ENCODE measurements at regions of chr5 and their contacts with region 1.

Region 1: GRCh38 chr5:173972925-173973615 is 15.9 kb upstream of the C5orf47 start:
- DNase-seq: peak; percentile 80 to 89 (median 87)
- H3K4me3 ChIP-seq: peak overlapping the region; percentile 41
- H3K27ac ChIP-seq: no peak overlapping the region
- H3K4me1 ChIP-seq: peaks cover 4% of the 10 kb centered on the region
- H3K27me3 ChIP-seq: no peaks in the 10 kb centered on the region
- CTCF ChIP-seq: peak; percentile 71 to 89 (median 88)
- EP300 ChIP-seq: no peak
- POLR2A ChIP-seq: no peak

Region 2: GRCh38 chr5:173615884-173616576 is 357.0 kb before region 1 on chr5:
- intact Hi-C with region 1: loop called (anchors 2 kb)
- DNase-seq: peak; percentile 46 to 72 (median 60)
- H3K4me3 ChIP-seq: peak overlapping the region; percentile 97
- H3K27ac ChIP-seq: peak overlapping the region; percentile 80 to 86
- H3K4me1 ChIP-seq: peaks cover 9% of the 10 kb centered on the region
- H3K27me3 ChIP-seq: no peaks in the 10 kb centered on the region
- CTCF ChIP-seq: peak; percentile 49 to 62 (median 51)
- EP300 ChIP-seq: no peak
- POLR2A ChIP-seq: no peak

Region 3: DNA sequence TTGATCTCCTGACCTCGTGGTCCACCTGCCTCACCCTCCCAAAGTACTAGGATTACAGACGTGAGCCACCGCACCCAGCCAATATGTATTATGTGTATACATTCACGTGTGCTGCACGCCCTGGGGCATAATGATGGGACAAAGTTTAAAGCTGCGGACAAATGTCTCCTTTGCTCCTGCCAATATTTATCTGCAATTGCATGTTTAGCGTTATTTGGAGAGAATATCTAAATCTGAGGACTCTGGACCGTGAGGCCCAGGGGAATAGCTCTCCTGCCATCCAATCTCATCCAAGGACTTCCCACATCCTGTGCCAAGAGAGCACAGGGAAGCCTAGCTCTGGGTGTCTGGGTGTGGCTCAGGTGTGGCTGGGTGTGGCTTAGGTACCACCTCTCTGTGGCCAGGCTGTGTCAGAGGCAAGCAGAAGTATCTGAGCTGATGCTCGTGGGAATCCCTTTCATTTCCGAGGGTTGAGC is 349.7 kb before region 1 on chr5:
- intact Hi-C with region 1: loop called (anchors 2 kb)
- DNase-seq: no peak
- H3K4me3 ChIP-seq: no peak overlapping the region
- H3K27ac ChIP-seq: no peak overlapping the region
- H3K4me1 ChIP-seq: no peaks in the 10 kb centered on the region
- H3K27me3 ChIP-seq: no peaks in the 10 kb centered on the region
- CTCF ChIP-seq: no peak
- EP300 ChIP-seq: no peak
- POLR2A ChIP-seq: no peak

Region 4: DNA sequence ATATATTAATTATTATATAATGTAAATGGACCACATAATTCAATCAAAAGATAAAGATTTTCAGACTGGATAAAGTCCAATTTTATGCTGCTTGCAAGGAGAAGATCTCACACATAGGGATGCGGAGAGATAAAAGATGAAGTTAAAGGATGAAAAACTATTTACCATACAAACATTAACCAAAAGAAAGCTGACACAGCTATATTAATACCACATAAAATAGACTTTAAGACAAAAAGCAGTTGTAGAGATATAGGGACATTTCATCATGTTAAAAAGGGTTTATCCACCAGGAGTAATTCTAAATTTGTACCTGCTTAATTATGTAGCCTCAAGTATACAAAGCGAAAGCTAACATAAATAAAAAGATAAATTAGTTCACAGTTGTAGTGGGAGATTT is 57.2 kb after region 1 on chr5:
- intact Hi-C with region 1: no loop called
- DNase-seq: no peak
- H3K4me3 ChIP-seq: no peak overlapping the region
- H3K27ac ChIP-seq: no peak overlapping the region
- H3K4me1 ChIP-seq: no peaks in the 10 kb centered on the region
- H3K27me3 ChIP-seq: no peaks in the 10 kb centered on the region
- CTCF ChIP-seq: no peak
- EP300 ChIP-seq: no peak
- POLR2A ChIP-seq: no peak

Region 5: DNA sequence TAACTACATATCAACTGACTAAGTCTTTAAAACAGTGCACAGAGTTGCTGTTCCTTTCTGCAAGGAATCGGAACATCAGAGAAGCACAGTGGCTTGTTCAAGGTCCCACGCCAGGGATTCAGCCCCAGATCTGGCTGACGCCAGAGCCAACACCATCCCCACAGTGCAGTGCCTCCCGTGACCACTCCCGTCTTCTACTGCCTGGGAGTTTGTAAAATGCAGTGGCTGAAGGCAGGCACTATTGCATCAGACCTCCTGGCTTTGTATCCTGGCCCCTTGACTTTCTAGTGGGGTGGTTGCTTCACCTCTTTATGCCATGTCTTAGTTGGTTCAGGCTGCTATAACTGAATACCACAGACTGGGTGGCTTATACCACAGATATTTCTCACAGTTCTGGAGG is 203.4 kb after region 1 on chr5:
- intact Hi-C with region 1: no loop called
- DNase-seq: no peak
- H3K4me3 ChIP-seq: no peak overlapping the region
- H3K27ac ChIP-seq: no peak overlapping the region
- H3K4me1 ChIP-seq: peaks cover 1% of the 10 kb centered on the region
- H3K27me3 ChIP-seq: no peaks in the 10 kb centered on the region
- CTCF ChIP-seq: no peak
- EP300 ChIP-seq: no peak
- POLR2A ChIP-seq: no peak

Measured in ovary (tissue), 10 donors.